ENCODE measurements at regions of chr3 and their contacts with region 1.

Region 1: GRCh38 chr3:177615015-177615414 is 417.7 kb upstream of the TBL1XR1 start:
- DNase-seq: peak; percentile 85
- H3K4me3 Mint-ChIP-seq: no peak overlapping the region
- H3K27ac Mint-ChIP-seq: peak overlapping the region; percentile 28
- H3K4me1 Mint-ChIP-seq: peaks cover 69% of the 10 kb centered on the region
- H3K27me3 Mint-ChIP-seq: no peaks in the 10 kb centered on the region
- CTCF ChIP-seq: no peak

Region 2: DNA sequence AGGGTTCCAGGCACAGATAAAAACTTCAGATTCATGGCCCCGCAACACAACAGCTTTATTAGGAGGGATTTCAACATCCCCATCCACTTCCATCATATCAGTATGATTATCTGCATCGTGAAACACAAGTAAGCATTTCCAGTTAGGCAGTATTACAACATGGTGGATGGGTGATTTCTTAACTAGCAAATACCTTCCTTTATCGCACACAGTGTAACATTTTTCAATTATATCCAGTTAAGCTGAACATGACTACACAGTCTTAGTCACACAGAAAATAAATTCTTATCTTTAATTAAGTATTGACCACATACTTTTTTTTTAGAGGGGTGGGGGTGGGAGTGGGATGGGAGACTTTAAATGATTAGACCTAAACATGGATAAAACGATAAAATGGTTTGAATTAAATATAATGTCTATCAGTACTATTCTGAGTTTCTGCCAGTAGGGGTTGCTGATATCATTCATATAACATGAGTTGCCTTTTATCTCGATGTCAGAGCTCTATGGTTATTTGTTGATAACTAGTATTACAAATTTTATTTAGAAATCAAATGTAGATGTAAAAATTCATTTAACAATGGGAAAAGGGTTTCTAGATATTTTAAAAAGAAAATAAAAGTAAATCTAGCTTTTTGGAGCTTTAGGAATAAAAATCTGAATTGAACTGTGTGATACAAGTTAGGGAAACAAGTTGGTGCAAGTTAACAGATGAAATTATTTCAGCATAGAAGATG is 564.3 kb before region 1 on chr3:
- CTCF ChIA-PET with region 1: no interaction called
- intact Hi-C with region 1: loop called (anchors 5 kb)
- DNase-seq: peak; percentile 21
- H3K4me3 Mint-ChIP-seq: no peak overlapping the region
- H3K27ac Mint-ChIP-seq: no peak overlapping the region
- H3K4me1 Mint-ChIP-seq: no peaks in the 10 kb centered on the region
- H3K27me3 Mint-ChIP-seq: no peaks in the 10 kb centered on the region
- CTCF ChIP-seq: peak; percentile 77

Region 3: GRCh38 chr3:177345049-177345972 is 269.7 kb before region 1 on chr3:
- CTCF ChIA-PET with region 1: no interaction called
- intact Hi-C with region 1: loop called (anchors 5 kb)
- DNase-seq: peak; percentile 93
- H3K4me3 Mint-ChIP-seq: peak overlapping the region; percentile 63
- H3K27ac Mint-ChIP-seq: peak overlapping the region; percentile 100
- H3K4me1 Mint-ChIP-seq: peaks cover 74% of the 10 kb centered on the region
- H3K27me3 Mint-ChIP-seq: no peaks in the 10 kb centered on the region
- CTCF ChIP-seq: no peak

Region 4: DNA sequence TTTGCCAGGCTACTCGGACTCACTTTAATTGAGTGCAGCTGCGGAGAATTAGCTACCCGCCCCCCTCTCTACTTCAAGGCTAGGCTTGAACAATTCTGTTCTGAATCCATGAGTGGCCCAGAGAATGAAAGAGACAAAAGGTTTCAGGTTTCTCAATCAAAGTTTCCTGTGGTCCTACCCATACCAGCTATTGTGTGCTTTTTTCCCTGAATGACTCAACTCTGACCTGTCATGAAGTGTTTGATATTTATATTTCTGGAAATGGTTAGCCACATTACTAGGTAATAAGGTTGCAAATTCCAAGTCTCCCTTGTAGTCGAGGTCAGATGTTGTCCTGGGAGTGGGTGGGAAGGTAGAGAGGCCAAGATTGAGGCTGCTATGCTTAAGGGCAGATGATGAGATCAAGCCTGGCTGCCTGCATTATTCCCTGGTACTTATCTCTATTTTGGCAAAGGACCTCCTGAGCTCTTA is 25.1 kb before region 1 on chr3:
- CTCF ChIA-PET with region 1: interaction called, 9 read pairs
- intact Hi-C with region 1: loop called (anchors 2 kb)
- DNase-seq: peak; percentile 50
- H3K4me3 Mint-ChIP-seq: peak overlapping the region; percentile 25
- H3K27ac Mint-ChIP-seq: peak overlapping the region; percentile 76
- H3K4me1 Mint-ChIP-seq: peaks cover 52% of the 10 kb centered on the region
- H3K27me3 Mint-ChIP-seq: no peaks in the 10 kb centered on the region
- CTCF ChIP-seq: no peak

Region 5: GRCh38 chr3:177810162-177810623 is 195.2 kb after region 1 on chr3:
- CTCF ChIA-PET with region 1: no interaction called
- intact Hi-C with region 1: loop called (anchors 5 kb)
- DNase-seq: no peak
- H3K4me3 Mint-ChIP-seq: no peak overlapping the region
- H3K27ac Mint-ChIP-seq: no peak overlapping the region
- H3K4me1 Mint-ChIP-seq: peaks cover 38% of the 10 kb centered on the region
- H3K27me3 Mint-ChIP-seq: no peaks in the 10 kb centered on the region
- CTCF ChIP-seq: no peak

Region 6: DNA sequence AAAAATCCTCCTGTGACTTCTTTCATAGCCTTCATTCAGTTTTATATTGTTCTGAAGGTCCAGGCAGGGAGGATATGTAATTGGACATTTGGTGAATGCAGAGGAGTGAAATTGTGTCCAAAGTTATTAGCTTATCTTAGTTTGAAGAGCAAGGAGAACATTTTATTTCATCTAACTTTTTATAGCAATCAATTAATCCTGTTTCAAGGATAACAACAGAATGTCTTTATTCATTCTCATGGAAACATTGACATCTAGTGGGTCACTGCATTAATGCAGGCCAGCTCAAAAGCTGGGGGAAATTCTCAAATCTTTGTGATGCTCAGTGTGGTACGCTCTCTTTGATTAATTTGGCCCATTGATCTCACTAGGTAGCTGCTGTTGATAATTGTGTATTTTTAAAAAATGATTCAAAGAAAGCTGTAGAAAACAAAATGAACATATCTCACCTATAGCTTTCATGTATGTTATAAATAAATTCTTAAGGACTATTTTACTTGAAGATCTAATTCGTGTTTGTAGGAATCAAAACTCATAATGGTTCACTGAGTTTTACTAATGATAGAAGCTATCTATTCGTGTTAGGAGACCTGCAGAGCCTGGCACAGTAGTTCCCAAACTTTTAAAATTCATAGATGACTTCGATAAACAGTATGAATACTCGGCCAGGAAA is 770.4 kb after region 1 on chr3:
- CTCF ChIA-PET with region 1: no interaction called
- intact Hi-C with region 1: loop called (anchors 10 kb)
- DNase-seq: peak; percentile 61
- H3K4me3 Mint-ChIP-seq: no peak overlapping the region
- H3K27ac Mint-ChIP-seq: no peak overlapping the region
- H3K4me1 Mint-ChIP-seq: no peaks in the 10 kb centered on the region
- H3K27me3 Mint-ChIP-seq: no peaks in the 10 kb centered on the region
- CTCF ChIP-seq: peak; percentile 78

Measured in Calu3 (cell line).